Activated CD8-positive, alpha-beta T cell treated with anti-CD3 and anti-CD28 coated beads, Interleukin-2, amount 10 ng/mL, durations not matched to agents 7 days and 5 days (primary cell): ENCODE measurements at regions of chr6 and their contacts with region 1.

Region 1: DNA sequence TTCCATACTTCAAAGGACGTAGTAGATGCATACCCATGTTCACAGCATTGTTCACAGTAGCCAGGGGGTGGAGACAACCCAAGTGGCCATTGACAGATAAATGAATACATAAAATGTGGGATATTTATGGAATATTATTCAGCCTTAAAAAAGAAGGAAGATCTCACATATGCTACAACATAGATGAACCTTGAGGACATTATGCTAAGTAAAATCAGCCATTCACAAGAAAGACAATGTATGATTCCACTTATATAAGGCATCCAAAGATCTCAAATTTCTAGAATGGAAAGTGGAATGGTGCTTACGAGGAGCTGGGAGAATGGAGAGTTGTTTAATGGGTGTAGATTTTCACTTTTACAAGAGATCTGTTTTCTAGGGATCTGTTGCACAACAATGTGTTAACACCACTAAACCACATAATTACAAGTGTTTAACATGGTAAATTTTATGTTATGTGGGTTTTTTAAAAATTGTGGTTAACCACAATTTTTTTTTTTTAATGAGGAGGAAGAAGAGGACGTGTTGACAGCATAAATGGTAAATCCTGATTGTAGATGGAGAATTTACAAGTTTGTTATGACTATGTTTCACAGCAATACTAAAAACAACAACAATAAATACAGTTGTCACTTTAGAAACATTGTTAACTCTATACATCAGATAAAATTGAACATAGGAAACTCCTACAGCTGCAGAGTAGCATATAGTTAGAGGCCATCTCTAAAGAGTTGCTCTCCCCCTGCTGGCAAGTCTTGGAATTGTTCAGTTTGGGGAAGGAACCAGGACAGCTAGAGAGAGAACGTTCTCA is 41.6 kb downstream of the CCN2 start:
- DNase-seq: peak; percentile 85
- ATAC-seq: peak; percentile 94
- H3K4me3 Mint-ChIP-seq: no peak overlapping the region
- H3K27ac Mint-ChIP-seq: no peak overlapping the region
- H3K4me1 Mint-ChIP-seq: peaks cover 10% of the 10 kb centered on the region
- H3K27me3 Mint-ChIP-seq: peaks cover 33% of the 10 kb centered on the region

Region 2: DNA sequence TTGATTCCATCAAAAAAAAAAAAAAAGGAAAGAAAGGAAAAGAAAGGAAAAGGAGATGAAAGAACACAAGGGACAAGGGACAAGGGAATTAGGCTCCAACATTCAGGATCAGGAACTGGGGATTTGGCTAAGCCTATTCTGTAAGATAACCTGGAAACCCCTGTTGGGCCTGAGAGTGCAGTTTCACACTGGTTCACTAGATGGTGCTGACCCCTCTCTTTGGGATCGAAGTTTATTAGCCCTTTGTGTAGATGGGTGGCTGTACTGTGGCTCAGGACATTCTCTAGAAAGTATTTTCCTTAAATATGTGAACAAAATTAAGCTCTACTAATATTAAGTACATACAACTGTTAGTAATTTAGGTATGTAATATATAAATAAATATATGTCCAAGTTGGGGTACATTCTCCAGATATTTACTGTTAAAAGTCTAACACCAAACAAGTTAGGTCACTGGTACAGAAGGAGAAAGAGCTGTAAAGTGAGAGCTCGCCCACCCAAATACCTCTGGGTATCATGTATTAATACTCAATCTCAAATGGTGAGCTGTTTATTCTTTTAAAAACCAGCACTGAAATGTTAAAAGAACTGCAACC is 214.7 kb before region 1 on chr6:
- CTCF ChIA-PET with region 1: interaction called, 28 read pairs
- POLR2A ChIA-PET with region 1: no interaction called
- DNase-seq: peak; percentile 54
- ATAC-seq: peak; percentile 74
- H3K4me3 Mint-ChIP-seq: no peak overlapping the region
- H3K27ac Mint-ChIP-seq: no peak overlapping the region
- H3K4me1 Mint-ChIP-seq: no peaks in the 10 kb centered on the region
- H3K27me3 Mint-ChIP-seq: no peaks in the 10 kb centered on the region